ENCODE measurements at regions of chr17 and their contacts with region 1.

Region 1: DNA sequence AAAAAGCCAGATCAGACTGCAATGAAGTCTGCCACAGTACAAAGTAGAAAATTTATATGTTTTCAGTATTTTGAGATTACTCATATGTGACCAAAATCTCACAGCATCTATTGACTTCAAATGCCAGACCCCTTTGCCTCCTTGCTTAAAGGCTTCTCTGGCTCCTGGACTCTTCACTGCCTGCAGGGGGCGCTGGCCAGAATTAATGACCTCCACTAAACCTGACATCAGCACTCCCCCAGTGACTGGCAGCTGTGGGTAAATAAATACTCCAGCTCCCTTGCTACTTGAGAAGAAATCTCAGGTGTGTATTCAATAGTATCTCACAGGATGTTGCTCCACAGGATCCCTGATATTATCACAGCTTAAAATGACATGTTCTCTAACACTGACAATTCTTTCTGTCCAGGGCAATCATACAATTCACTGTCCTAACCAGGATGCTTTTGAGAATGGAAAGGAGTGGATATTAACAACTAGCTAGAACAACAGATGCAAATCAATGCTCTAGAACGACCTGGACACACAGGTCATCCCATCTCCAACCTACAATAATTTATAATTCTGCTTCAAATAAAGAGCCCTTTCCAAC is 4.0 kb downstream of the BECN1 start:
- DNase-seq: peak; percentile 81
- ATAC-seq: peak; percentile 35
- H3K4me3 Mint-ChIP-seq: no peak overlapping the region
- H3K27ac Mint-ChIP-seq: no peak overlapping the region
- H3K4me1 Mint-ChIP-seq: peaks cover 33% of the 10 kb centered on the region
- H3K27me3 Mint-ChIP-seq: no peaks in the 10 kb centered on the region

Region 2: DNA sequence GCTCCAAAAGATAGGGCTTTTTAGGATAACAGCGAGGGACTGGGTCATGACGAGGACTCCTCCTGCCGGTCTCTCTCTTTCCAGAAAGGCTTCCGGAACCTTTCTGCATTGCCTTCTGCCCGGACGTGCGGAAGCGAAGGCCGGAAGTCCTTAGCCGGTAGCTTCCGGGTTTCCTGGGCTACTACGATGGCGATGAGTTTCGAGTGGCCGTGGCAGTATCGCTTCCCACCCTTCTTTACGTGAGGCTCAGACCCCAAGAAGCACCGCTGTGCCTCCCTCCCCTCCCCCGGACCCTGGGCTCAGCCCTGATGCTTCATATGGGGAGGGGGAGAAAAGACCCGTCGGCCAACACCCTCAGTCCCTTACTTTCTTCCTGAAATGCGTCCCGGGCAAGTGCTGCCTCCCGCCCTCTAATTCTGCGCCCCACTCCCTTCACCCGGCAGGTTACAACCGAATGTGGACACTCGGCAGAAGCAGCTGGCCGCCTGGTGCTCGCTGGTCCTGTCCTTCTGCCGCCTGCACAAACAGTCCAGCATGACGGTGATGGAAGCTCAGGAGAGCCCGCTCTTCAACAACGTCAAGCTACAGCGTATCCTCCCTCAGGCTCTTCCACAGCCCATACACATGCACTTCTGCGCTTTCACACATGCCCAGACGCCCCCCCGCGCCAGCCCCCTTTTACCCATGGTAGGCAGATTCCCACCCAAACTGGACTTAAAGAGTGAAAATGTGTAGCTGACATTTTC is 46.6 kb before region 1 on chr17 and contains the start of gene VPS25:
- CTCF ChIA-PET with region 1: interaction called, 13 read pairs
- DNase-seq: peak; percentile 84
- ATAC-seq: peak; percentile 97
- H3K4me3 Mint-ChIP-seq: peak within 1 kb of the TSS; percentile 99
- H3K27ac Mint-ChIP-seq: peak within 1 kb of the TSS; percentile 98
- H3K4me1 Mint-ChIP-seq: peaks cover 35% of the 10 kb centered on the region
- H3K27me3 Mint-ChIP-seq: no peaks in the 10 kb centered on the region
- total RNA-seq, gene VPS25: 62.8 to 77.8 TPM

Region 3: DNA sequence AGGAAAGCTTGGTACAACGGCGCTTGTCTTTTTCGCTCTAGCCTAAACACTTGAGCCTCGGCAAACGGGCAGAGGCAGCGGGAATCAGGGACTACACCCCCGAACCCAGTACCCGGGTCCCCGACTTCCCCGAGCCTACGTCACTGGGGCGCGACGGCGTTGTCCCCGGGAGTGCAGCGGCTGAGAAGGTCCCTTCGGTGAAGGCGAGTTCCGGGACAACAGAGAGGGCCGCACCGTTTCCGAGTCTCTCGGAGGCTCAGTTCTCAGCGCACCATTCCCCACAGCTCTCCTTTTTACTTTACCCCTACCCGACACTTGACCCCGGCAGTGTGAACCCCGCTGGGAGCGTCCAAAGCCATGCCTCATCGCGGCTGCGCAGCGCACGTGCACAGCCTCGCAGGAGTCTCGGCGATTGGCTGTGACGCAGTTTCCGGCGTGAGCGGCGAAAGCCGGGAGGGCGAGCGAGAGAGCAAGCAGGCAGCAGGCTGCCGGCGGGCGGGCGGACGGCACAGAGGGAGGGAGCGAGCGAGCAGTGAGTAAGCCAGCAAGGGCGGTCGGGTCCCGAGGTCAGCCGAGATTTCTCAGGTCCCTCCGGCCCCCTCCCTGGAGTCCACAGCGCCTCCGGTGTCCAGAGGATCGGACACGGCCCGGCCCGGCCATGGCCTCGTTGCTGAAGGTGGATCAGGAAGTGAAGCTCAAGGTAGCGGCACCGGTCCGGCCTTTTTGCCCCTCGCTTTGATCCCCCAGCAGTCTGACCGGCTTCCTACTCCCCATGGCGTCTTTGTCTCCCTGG is 13.1 kb after region 1 on chr17 and contains the start of gene PSME3:
- CTCF ChIA-PET with region 1: interaction called, 33 read pairs
- DNase-seq: peak; percentile 94
- ATAC-seq: peak; percentile 94
- H3K4me3 Mint-ChIP-seq: peak within 1 kb of the TSS; percentile 91
- H3K27ac Mint-ChIP-seq: peak within 1 kb of the TSS; percentile 97
- H3K4me1 Mint-ChIP-seq: peaks cover 28% of the 10 kb centered on the region
- H3K27me3 Mint-ChIP-seq: peaks cover 3% of the 10 kb centered on the region
- total RNA-seq, gene PSME3: 123 to 166 TPM

Region 4: DNA sequence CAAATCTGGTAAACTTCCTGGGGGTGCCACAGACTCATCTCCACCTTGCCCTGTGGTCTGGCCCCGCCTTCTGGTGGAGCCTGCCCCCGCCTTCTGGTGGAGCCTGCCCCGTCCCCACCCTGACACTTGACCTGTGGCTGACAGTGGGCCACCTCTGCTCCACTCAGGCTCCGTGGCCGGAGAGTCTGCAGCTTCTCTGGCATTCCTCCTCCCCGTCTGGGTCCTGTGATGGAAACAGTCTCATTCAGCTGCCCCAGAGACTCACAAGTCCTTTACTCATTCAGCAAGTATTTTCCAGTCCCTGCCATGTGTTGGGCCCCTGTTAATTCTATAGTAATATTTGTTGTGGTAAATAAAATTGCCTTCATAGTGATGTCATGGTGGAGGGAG is 59.6 kb after region 1 on chr17:
- CTCF ChIA-PET with region 1: no interaction called
- DNase-seq: no peak
- ATAC-seq: no peak
- H3K4me3 Mint-ChIP-seq: no peak overlapping the region
- H3K27ac Mint-ChIP-seq: no peak overlapping the region
- H3K4me1 Mint-ChIP-seq: no peaks in the 10 kb centered on the region
- H3K27me3 Mint-ChIP-seq: peaks cover 26% of the 10 kb centered on the region

Region 5: GRCh38 chr17:42997984-42998938 is 178.2 kb after region 1 on chr17 and contains the start of gene RPL27:
- CTCF ChIA-PET with region 1: interaction called, 11 read pairs
- DNase-seq: peak; percentile 99
- ATAC-seq: peak; percentile 99
- H3K4me3 Mint-ChIP-seq: peak within 1 kb of the TSS; percentile 100
- H3K27ac Mint-ChIP-seq: peak within 1 kb of the TSS; percentile 99
- H3K4me1 Mint-ChIP-seq: peaks cover 36% of the 10 kb centered on the region
- H3K27me3 Mint-ChIP-seq: no peaks in the 10 kb centered on the region
- total RNA-seq, gene RPL27: 889 to 934 TPM